ENCODE measurements at regions of chr17 and their contacts with region 1.

Region 1: DNA sequence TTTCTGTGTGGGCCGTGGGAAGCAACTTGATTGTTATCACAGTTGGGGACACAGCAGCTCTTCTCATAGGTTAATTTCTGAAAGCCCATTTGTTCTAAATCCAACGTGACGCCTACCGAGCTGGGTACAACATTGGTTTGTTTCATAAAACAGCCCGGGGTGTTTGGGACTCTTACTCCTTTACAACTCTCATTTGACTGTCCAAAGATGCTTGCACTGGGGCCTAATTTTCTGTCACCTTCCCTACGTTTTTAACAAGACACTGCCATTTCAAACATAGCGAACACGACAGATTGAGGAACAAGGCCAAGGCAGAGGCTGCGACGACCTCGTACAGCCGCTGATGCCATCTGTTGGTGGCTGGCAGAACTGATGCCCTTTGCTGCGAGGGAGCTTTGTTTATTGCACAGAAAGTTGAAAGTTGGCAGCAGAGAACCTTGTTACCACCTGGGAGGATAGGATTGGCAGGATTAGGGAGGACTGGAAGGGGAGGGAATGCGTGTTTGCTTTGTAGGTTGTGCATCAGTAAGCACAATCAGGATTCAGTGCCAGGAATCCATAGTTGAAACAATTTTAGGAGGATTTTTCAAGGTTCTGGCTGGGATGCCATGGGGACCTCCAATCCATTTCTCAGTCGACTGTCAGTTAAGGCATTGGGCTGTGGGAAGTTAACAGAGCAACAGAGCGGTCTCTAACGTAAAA is 98.3 kb downstream of the PITPNC1 start:
- DNase-seq: peak; percentile 64
- H3K4me3 ChIP-seq: no peak overlapping the region
- H3K27ac ChIP-seq: no peak overlapping the region
- H3K4me1 ChIP-seq: peaks cover 24% of the 10 kb centered on the region
- H3K27me3 ChIP-seq: no peaks in the 10 kb centered on the region
- CTCF ChIP-seq: peak; percentile 99

Region 2: DNA sequence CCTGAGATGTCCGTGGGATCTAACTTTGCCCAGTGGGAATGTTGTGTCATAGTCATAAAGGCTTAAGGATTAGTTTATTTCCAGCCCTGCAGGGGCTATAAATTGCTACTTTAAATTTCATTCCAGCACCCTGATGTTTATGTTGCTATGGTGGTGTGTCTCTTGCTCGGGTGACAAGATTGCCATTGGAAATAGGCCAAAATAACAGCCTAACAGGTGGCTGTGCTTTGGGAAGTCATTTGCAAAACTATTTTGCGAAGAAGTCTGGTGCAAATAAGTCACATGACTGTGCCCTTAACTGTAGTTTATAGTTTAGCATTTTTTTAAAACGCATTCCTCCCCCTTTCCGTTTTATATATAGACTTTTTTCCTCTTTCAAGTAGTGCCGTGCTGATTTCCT is 75.2 kb before region 1 on chr17:
- CTCF ChIA-PET with region 1: no interaction called
- dilution Hi-C with region 1: no loop called
- in situ Hi-C with region 1: no loop called
- intact Hi-C with region 1: no loop called
- DNase-seq: no peak
- H3K4me3 ChIP-seq: no peak overlapping the region
- H3K27ac ChIP-seq: no peak overlapping the region
- H3K4me1 ChIP-seq: no peaks in the 10 kb centered on the region
- H3K27me3 ChIP-seq: no peaks in the 10 kb centered on the region
- CTCF ChIP-seq: no peak

Region 3: GRCh38 chr17:67421869-67422273 is 53.5 kb before region 1 on chr17:
- CTCF ChIA-PET with region 1: no interaction called
- dilution Hi-C with region 1: no loop called
- in situ Hi-C with region 1: no loop called
- intact Hi-C with region 1: loop called (anchors 2 kb)
- DNase-seq: peak; percentile 100
- H3K4me3 ChIP-seq: no peak overlapping the region
- H3K27ac ChIP-seq: peak overlapping the region; percentile 96
- H3K4me1 ChIP-seq: peaks cover 39% of the 10 kb centered on the region
- H3K27me3 ChIP-seq: no peaks in the 10 kb centered on the region
- CTCF ChIP-seq: no peak

Region 4: GRCh38 chr17:67602956-67603355 is 127.6 kb after region 1 on chr17:
- CTCF ChIA-PET with region 1: interaction called, 3 read pairs
- dilution Hi-C with region 1: no loop called
- in situ Hi-C with region 1: no loop called
- intact Hi-C with region 1: loop called (anchors 10 kb)
- DNase-seq: peak; percentile 20
- H3K4me3 ChIP-seq: no peak overlapping the region
- H3K27ac ChIP-seq: no peak overlapping the region
- H3K4me1 ChIP-seq: no peaks in the 10 kb centered on the region
- H3K27me3 ChIP-seq: no peaks in the 10 kb centered on the region
- CTCF ChIP-seq: peak; percentile 36 to 52

Region 5: DNA sequence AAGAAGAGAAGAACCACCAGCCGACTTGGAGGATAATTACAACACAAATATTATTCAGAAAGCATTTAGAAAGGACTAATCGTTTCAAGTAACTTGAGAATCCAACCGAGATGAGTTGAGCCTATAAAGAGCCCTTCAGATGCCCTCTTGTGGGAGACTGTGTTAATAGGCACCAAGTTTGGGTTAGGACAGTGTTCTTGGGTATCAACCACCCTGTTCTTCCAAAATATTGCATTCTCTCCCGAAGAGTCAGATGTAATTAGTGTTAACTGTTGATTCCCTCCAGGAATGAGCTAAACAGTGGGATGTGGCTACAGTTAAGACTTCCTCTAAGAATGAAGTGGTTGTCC is 154.6 kb after region 1 on chr17:
- CTCF ChIA-PET with region 1: no interaction called
- dilution Hi-C with region 1: no loop called
- in situ Hi-C with region 1: no loop called
- intact Hi-C with region 1: loop called (anchors 1 kb)
- DNase-seq: peak; percentile 38
- H3K4me3 ChIP-seq: no peak overlapping the region
- H3K27ac ChIP-seq: no peak overlapping the region
- H3K4me1 ChIP-seq: no peaks in the 10 kb centered on the region
- H3K27me3 ChIP-seq: no peaks in the 10 kb centered on the region
- CTCF ChIP-seq: peak; percentile 29 to 50

Region 6: GRCh38 chr17:67689534-67690177 is 214.3 kb after region 1 on chr17:
- CTCF ChIA-PET with region 1: no interaction called
- dilution Hi-C with region 1: no loop called
- in situ Hi-C with region 1: no loop called
- intact Hi-C with region 1: loop called (anchors 1 kb)
- DNase-seq: peak; percentile 42
- H3K4me3 ChIP-seq: no peak overlapping the region
- H3K27ac ChIP-seq: no peak overlapping the region
- H3K4me1 ChIP-seq: no peaks in the 10 kb centered on the region
- H3K27me3 ChIP-seq: no peaks in the 10 kb centered on the region
- CTCF ChIP-seq: peak; percentile 67 to 73